Right cardiac atrium (tissue), 5 donors: ENCODE measurements at regions of chr16 and their contacts with region 1.

Region 1: DNA sequence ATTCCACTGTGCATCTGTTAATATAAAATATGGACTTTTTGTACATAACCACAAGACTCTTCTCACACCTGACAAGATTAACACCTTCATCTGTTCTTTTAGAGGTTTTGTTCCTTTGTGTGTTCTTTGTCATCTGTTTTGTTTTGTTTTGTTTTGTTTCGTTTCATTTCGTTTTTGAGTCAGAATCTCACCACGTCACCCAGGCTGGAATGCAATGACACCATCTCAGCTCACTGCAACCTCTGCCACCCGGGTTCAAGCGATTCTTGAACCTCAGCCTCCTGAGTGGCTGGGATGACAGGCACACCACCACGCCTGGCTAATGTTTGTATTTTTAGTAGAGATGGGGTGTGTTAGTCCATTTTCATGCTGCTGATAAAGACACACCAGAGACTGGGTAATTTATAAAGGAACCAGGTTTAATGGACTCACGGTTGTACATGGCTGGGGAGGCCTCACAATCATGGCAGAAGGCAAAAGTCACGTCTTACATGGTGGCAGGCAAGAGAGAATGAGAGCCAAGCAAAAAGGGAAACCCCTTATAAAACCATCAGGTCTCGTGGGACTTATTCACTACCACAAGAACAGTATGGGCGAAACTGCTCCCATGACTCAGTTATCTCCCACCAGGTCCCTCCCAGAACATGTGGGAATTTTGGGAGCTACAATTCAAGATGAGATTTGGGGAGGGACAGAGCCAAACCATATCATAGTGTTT is 22.3 kb downstream of the C16orf90 start:
- DNase-seq: peak in 1 of 3 donors; percentile 9
- ATAC-seq: no peak
- H3K4me3 ChIP-seq: no peak overlapping the region
- H3K27ac ChIP-seq: no peak overlapping the region
- H3K4me1 ChIP-seq: peaks cover 13% of the 10 kb centered on the region
- H3K27me3 ChIP-seq: no peaks in the 10 kb centered on the region

Region 2: DNA sequence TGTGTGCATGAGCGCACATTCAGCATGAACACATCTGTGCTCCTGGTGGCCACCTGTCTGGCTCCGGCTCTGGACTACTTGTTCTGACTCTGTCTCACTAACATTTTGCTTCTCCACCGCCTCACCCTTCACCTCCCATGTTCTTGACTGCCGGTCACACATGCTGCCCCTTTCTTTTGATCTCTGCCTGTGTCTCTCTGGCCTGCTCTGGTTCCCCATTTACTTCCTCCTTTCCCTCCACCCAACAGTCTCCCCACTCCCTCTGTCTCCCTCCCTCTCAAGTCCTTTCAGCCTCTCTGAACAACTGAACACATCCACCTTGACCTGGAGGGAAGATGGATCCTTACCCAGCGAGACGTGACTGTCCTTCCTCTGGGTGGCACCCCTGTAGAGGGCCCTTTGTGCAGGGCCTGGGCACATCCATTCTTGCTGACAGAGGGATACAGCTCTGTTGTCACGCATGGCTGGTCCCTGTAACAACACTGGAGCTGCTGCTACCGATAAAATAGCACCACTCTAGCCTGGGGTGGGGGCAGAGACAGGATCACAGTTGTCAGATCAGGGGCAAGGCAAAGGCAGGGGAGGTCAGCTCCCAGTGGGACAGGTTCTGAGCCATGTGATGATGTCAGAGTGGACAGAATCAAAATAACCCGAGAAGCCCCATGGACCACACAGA is 83.2 kb before region 1 on chr16:
- intact Hi-C with region 1: no loop called
- DNase-seq: no peak
- ATAC-seq: no peak
- H3K4me3 ChIP-seq: no peak overlapping the region
- H3K27ac ChIP-seq: no peak overlapping the region
- H3K4me1 ChIP-seq: no peaks in the 10 kb centered on the region
- H3K27me3 ChIP-seq: no peaks in the 10 kb centered on the region

Region 3: GRCh38 chr16:3490911-3491629 is 18.0 kb after region 1 on chr16:
- intact Hi-C with region 1: no loop called
- DNase-seq: peak in 2 of 3 donors; percentile 21 to 49
- ATAC-seq: no peak
- H3K4me3 ChIP-seq: no peak overlapping the region
- H3K27ac ChIP-seq: no peak overlapping the region
- H3K4me1 ChIP-seq: no peaks in the 10 kb centered on the region
- H3K27me3 ChIP-seq: no peaks in the 10 kb centered on the region

Region 4: GRCh38 chr16:3580689-3581088 is 107.7 kb after region 1 on chr16:
- intact Hi-C with region 1: loop called in 1 of 4 experiments (anchors 5 kb)
- DNase-seq: no peak
- ATAC-seq: no peak
- H3K4me3 ChIP-seq: no peak overlapping the region
- H3K27ac ChIP-seq: no peak overlapping the region
- H3K4me1 ChIP-seq: no peaks in the 10 kb centered on the region
- H3K27me3 ChIP-seq: no peaks in the 10 kb centered on the region